Natural killer cell (primary cell): ENCODE measurements at regions of chr10 and their contacts with region 1.

Region 1: DNA sequence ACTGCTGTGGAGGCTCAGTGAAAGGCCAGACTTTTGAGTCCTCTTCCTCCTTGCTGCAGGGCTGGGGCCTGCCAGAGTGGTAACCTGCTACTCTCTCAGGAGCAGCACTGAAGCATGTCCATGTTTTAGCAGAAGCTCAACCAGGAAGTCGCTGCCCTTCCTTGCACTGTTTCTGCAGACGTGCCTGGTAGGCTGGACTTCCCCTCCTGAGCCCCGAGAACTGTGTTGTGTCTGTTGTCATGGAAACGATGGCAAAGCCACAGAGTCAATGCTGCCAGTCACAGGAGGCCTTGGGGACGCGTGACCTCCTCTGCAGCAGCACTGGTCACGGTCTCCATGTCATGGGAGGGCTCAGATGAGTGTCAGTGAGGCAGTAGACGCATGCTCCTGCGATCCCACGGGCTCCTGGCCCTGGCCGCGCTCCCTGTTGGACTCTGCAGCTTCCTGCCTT is 145.4 kb downstream of the FANK1 start:
- DNase-seq: peak; percentile 85 to 88
- ATAC-seq: peak; percentile 83 to 95 (median 92)
- H3K4me3 ChIP-seq: peak overlapping the region; percentile 23
- H3K4me3 Mint-ChIP-seq: peak overlapping the region; percentile 73
- H3K27ac ChIP-seq: peak overlapping the region; percentile 97
- H3K27ac Mint-ChIP-seq: peak overlapping the region; percentile 98 to 99
- H3K4me1 ChIP-seq: peaks cover 27% of the 10 kb centered on the region
- H3K4me1 Mint-ChIP-seq: peaks cover 20 to 28% of the 10 kb centered on the region in 2 donors
- H3K27me3 ChIP-seq: no peaks in the 10 kb centered on the region
- H3K27me3 Mint-ChIP-seq: no peaks in the 10 kb centered on the region
- CTCF ChIP-seq: no peak

Region 2: GRCh38 chr10:126013489-126014281 is 28.1 kb before region 1 on chr10:
- intact Hi-C with region 1: loop called (anchors 1 kb)
- DNase-seq: peak; percentile 19 to 30
- ATAC-seq: peak in 2 of 3 donors; percentile 22 to 38
- H3K4me3 ChIP-seq: no peak overlapping the region
- H3K4me3 Mint-ChIP-seq: peak overlapping the region; percentile 33
- H3K27ac ChIP-seq: no peak overlapping the region
- H3K27ac Mint-ChIP-seq: peak overlapping the region; percentile 86 to 99
- H3K4me1 ChIP-seq: peaks cover 20% of the 10 kb centered on the region
- H3K4me1 Mint-ChIP-seq: peaks cover 32 to 61% of the 10 kb centered on the region in 2 donors
- H3K27me3 ChIP-seq: no peaks in the 10 kb centered on the region
- H3K27me3 Mint-ChIP-seq: no peaks in the 10 kb centered on the region
- CTCF ChIP-seq: peak; percentile 18